ENCODE measurements at regions of chr12 and their contacts with region 1.

Region 1: GRCh38 chr12:65840793-65841670 is 16.7 kb downstream of the HMGA2 start:
- DNase-seq: no peak
- ATAC-seq: peak; percentile 28
- H3K4me3 ChIP-seq: no peak overlapping the region
- H3K27ac ChIP-seq: peak overlapping the region; percentile 100
- H3K4me1 ChIP-seq: peaks cover 68 to 96% of the 10 kb centered on the region in 2 experiments
- H3K27me3 ChIP-seq: no peaks in the 10 kb centered on the region
- CTCF ChIP-seq: peak in 2 of 3 experiments; percentile 21 to 30; a peak in 2 of 6 replicates
- POLR2A ChIP-seq: no peak
- RAD21 ChIP-seq: no peak

Region 2: DNA sequence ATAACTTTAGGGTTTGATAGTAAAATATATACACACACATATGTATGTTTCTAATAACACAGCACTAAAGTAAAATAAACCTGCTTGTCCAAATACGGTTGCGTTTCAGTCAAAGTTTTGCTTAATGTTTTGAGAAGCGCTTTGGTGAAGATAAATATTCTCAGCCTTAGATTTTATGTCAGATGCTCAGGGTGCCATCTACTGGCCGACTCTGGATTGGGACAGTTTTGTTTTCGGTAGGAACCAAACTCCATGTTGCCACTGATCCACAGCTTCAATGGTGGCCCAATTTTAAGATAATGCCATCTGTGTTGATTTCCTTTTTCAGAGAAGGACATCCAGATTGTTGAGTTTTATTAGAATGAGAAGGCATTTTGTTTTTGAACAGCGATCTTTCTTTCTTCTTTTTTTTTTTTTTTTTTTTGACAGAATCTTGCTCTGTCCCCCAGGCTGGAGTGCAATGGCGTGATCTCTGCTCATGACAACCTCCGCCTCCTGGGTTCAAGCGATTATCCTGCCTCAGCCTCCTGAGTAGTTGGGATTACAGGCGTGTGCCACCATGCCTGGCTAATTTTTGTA is 246.4 kb after region 1 on chr12:
- CTCF ChIA-PET with region 1: no interaction called
- POLR2A ChIA-PET with region 1: interaction called, 3 read pairs
- RAD21 ChIA-PET with region 1: no interaction called
- intact Hi-C with region 1: loop called (anchors 5 kb)
- DNase-seq: peak; percentile 68
- ATAC-seq: peak; percentile 91
- H3K4me3 ChIP-seq: no peak overlapping the region
- H3K27ac ChIP-seq: no peak overlapping the region
- H3K4me1 ChIP-seq: peaks cover 0 to 14% of the 10 kb centered on the region in 2 experiments; a peak in 1 of 4 replicates
- H3K27me3 ChIP-seq: no peaks in the 10 kb centered on the region
- CTCF ChIP-seq: peak; percentile 75 to 97 (median 90)
- POLR2A ChIP-seq: no peak
- RAD21 ChIP-seq: peak; percentile 95

Measured in HCT116 (cell line).